ENCODE measurements at regions of chr14 and their contacts with region 1.

Region 1: GRCh38 chr14:72665259-72665658 is 228.6 kb downstream of the DPF3 start:
- DNase-seq: peak; percentile 99
- ATAC-seq: peak; percentile 83
- H3K4me3 ChIP-seq: peak overlapping the region; percentile 39
- H3K27ac ChIP-seq: peak overlapping the region; percentile 86
- H3K4me1 ChIP-seq: peaks cover 41% of the 10 kb centered on the region
- H3K27me3 ChIP-seq: no peaks in the 10 kb centered on the region
- CTCF ChIP-seq: no peak

Region 2: GRCh38 chr14:72643317-72643801 is 21.9 kb before region 1 on chr14:
- CTCF ChIA-PET with region 1: no interaction called
- POLR2A ChIA-PET with region 1: no interaction called
- intact Hi-C with region 1: loop called (anchors 1 kb)
- DNase-seq: peak; percentile 98
- ATAC-seq: peak; percentile 99
- H3K4me3 ChIP-seq: no peak overlapping the region
- H3K27ac ChIP-seq: peak overlapping the region; percentile 76
- H3K4me1 ChIP-seq: peaks cover 55% of the 10 kb centered on the region
- H3K27me3 ChIP-seq: no peaks in the 10 kb centered on the region
- CTCF ChIP-seq: no peak; the same call in 1 of the 2 replicates

Region 3: DNA sequence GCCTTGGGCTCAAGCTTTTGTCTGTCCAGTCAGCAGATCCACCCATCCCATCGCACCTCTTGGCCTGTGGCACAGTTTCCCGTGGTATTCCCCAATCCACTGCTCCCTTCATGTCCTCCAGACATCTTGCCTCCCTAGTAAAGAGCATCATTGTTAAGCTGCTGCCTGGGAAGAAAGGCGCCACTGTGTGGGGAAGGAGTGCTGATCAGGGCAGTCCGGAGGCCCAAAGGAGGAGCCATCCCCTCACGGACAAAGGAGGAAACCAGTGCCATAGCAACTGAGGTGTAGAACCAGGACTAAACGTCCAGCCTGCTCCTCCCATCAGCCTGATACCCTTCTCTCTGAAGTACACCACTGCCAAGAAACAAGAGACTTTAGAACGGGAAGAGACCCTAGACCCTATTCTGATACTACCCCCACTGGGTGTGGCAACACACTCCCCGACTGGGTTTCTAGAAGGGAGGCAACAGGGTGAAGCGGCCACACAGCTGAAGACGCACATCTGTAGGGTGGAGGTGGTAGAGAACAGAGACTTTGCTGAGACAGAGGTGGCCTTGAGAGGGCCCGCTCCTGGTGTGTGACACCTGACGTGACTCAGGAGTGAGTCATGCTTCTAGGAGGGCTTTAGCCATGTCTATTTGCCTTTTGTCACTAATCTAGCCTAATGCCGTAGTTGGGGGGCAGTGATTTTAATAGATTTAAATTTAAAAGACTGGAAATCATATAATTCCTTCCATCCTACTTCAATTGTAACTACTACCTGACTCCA is 43.6 kb after region 1 on chr14:
- CTCF ChIA-PET with region 1: interaction called, 3 read pairs
- POLR2A ChIA-PET with region 1: no interaction called
- intact Hi-C with region 1: loop called (anchors 1 kb)
- DNase-seq: peak; percentile 91
- ATAC-seq: peak; percentile 98
- H3K4me3 ChIP-seq: no peak overlapping the region
- H3K27ac ChIP-seq: no peak overlapping the region
- H3K4me1 ChIP-seq: peaks cover 12% of the 10 kb centered on the region
- H3K27me3 ChIP-seq: no peaks in the 10 kb centered on the region
- CTCF ChIP-seq: 0 out of 2 replicates have a peak, but pooled peaks have one; percentile 17

Region 4: DNA sequence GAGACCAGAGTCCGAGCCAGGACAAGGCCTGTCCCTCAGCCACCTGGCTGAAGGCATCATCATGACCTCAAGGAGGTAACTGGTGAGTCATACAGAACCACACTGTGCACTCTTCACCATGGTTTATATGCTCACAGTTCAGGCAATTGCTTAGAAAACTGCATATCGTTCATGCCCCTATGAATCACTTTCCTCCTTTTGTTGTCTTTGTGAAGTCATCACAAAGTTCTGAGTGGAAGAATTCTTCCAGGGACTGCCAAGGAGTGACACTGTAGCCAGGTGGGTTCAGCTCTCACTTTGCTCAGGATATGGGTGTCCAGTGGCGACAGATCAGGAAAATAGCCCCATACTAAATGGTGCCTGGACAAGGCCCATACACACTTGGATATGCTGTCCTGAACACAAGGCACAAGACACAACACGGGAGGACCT is 136.1 kb after region 1 on chr14:
- CTCF ChIA-PET with region 1: no interaction called
- POLR2A ChIA-PET with region 1: no interaction called
- intact Hi-C with region 1: loop called (anchors 5 kb)
- DNase-seq: peak; percentile 99
- ATAC-seq: peak; percentile 98
- H3K4me3 ChIP-seq: peak overlapping the region; percentile 9; the same call in 1 of the 2 replicates
- H3K27ac ChIP-seq: peak overlapping the region; percentile 94
- H3K4me1 ChIP-seq: peaks cover 27% of the 10 kb centered on the region
- H3K27me3 ChIP-seq: no peaks in the 10 kb centered on the region
- CTCF ChIP-seq: no peak

Region 5: DNA sequence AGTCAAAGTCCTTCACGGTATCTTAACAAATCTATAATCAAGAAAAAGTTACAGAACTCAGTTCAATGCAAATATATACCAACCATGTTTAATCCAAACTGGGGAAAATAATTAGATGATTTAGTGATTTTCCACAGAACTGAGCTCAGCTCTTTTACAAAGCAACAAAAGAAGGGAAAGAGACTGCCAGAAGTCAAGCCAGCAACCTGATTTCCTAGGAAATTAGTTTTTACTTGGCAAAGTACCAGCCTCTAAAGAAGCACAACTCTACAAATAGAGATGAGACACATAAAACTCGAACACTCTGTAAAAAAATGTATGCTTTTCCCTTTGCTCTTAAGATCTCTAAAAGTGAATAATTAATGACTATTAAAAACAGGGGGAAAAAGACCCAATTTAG is 773.7 kb after region 1 on chr14:
- CTCF ChIA-PET with region 1: no interaction called
- POLR2A ChIA-PET with region 1: no interaction called
- intact Hi-C with region 1: loop called (anchors 5 kb)
- DNase-seq: no peak
- ATAC-seq: no peak
- H3K4me3 ChIP-seq: no peak overlapping the region
- H3K27ac ChIP-seq: no peak overlapping the region
- H3K4me1 ChIP-seq: no peaks in the 10 kb centered on the region
- H3K27me3 ChIP-seq: no peaks in the 10 kb centered on the region
- CTCF ChIP-seq: no peak